ENCODE measurements at regions of chr17 and their contacts with region 1.

Region 1: DNA sequence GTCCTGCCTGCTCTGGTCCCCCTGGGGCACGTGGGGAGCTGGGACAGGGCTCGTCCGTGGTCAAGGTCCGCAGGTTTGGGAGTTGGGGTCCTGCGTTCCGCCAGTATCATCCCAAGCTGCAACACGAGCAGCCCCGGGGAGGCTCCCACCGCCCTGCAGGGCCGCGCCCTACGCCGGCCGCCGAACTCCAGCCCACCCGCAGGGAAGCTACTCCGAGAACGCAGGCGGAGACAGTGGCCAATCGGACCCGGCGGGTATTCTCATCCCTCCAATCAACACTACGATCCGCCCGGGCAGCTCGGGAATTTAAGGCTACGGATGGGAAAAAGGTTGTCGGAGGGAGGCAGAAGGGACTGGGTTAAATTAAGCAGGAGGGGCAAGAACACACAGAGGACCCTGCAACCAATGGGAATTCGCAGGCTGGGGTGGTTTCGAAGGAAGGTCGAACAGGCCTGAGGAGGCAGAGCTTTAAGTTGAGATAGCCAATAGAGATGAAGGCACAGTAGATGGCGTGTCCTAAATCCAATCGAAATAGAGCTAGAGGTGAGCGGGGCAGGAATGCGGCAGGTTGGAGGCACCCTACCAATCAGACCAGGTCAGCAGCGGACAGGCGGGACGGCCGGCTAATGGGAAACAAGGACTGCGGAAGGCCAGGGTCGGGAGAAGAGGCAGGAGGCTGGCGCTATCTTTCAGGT is 626 bp downstream of the SPAG7 start:
- DNase-seq: peak; percentile 98
- H3K4me3 Mint-ChIP-seq: no peak overlapping the region
- H3K27ac Mint-ChIP-seq: peak overlapping the region; percentile 67
- H3K4me1 Mint-ChIP-seq: peaks cover 20% of the 10 kb centered on the region
- H3K27me3 Mint-ChIP-seq: no peaks in the 10 kb centered on the region

Region 2: GRCh38 chr17:4939796-4940624 is 27.0 kb before region 1 on chr17 and contains the starts of genes RNF167 and SLC25A11:
- CTCF ChIA-PET with region 1: interaction called, 7 read pairs
- POLR2A ChIA-PET with region 1: interaction called, 44 read pairs
- DNase-seq: peak; percentile 99
- H3K4me3 Mint-ChIP-seq: peak within 1 kb of the TSS; percentile 92
- H3K27ac Mint-ChIP-seq: peak within 1 kb of the TSS; percentile 96
- H3K4me1 Mint-ChIP-seq: peaks cover 59% of the 10 kb centered on the region
- H3K27me3 Mint-ChIP-seq: no peaks in the 10 kb centered on the region
- total RNA-seq, gene RNF167: 254 to 273 TPM
- total RNA-seq, gene SLC25A11: 73.0 to 75.3 TPM

Region 3: GRCh38 chr17:4948931-4949320 is 18.1 kb before region 1 on chr17:
- CTCF ChIA-PET with region 1: interaction called, 7 read pairs
- POLR2A ChIA-PET with region 1: interaction called, 44 read pairs
- DNase-seq: peak; percentile 80
- H3K4me3 Mint-ChIP-seq: peak overlapping the region; percentile 92
- H3K27ac Mint-ChIP-seq: peak overlapping the region; percentile 99
- H3K4me1 Mint-ChIP-seq: peaks cover 37% of the 10 kb centered on the region
- H3K27me3 Mint-ChIP-seq: no peaks in the 10 kb centered on the region

Region 4: GRCh38 chr17:4980644-4981216 is 13.7 kb after region 1 on chr17:
- CTCF ChIA-PET with region 1: interaction called, 23 read pairs
- POLR2A ChIA-PET with region 1: no interaction called
- DNase-seq: peak; percentile 79
- H3K4me3 Mint-ChIP-seq: no peak overlapping the region
- H3K27ac Mint-ChIP-seq: peak overlapping the region; percentile 72
- H3K4me1 Mint-ChIP-seq: peaks cover 29% of the 10 kb centered on the region
- H3K27me3 Mint-ChIP-seq: no peaks in the 10 kb centered on the region